ENCODE measurements at regions of chr3 and their contacts with region 1.

Region 1: GRCh38 chr3:112519424-112520001 is 20.2 kb upstream of the BTLA start:
- DNase-seq: peak in 1 of 2 donors; percentile 36
- H3K4me3 ChIP-seq: no peak overlapping the region
- CTCF ChIP-seq: no peak
- POLR2A ChIP-seq: no peak

Region 2: GRCh38 chr3:112333002-112333380 is 186.5 kb before region 1 on chr3 and contains the start of gene CD200:
- intact Hi-C with region 1: loop called (anchors 10 kb)
- DNase-seq: peak in 1 of 2 donors; percentile 90
- H3K4me3 ChIP-seq: peak within 1 kb of the TSS; percentile 29
- CTCF ChIP-seq: no peak
- POLR2A ChIP-seq: no peak
- total RNA-seq, gene CD200: 2.7 to 8.2 (median 5.6) TPM

Region 3: GRCh38 chr3:112498914-112499711 is 20.4 kb before region 1 on chr3 and contains the start of gene BTLA:
- intact Hi-C with region 1: no loop called
- DNase-seq: no peak
- H3K4me3 ChIP-seq: no peak within 1 kb of the TSS
- CTCF ChIP-seq: no peak
- POLR2A ChIP-seq: no peak
- total RNA-seq, gene BTLA: 0.11 to 2.6 (median 0.72) TPM

Region 4: GRCh38 chr3:113128386-113129015 is 609.0 kb after region 1 on chr3:
- intact Hi-C with region 1: no loop called
- DNase-seq: no peak
- H3K4me3 ChIP-seq: no peak overlapping the region
- CTCF ChIP-seq: no peak
- POLR2A ChIP-seq: no peak

Measured in lower leg skin (tissue), 4 donors.